Calu3 (cell line): ENCODE measurements at regions of chrX and their contacts with region 1.

Region 1: DNA sequence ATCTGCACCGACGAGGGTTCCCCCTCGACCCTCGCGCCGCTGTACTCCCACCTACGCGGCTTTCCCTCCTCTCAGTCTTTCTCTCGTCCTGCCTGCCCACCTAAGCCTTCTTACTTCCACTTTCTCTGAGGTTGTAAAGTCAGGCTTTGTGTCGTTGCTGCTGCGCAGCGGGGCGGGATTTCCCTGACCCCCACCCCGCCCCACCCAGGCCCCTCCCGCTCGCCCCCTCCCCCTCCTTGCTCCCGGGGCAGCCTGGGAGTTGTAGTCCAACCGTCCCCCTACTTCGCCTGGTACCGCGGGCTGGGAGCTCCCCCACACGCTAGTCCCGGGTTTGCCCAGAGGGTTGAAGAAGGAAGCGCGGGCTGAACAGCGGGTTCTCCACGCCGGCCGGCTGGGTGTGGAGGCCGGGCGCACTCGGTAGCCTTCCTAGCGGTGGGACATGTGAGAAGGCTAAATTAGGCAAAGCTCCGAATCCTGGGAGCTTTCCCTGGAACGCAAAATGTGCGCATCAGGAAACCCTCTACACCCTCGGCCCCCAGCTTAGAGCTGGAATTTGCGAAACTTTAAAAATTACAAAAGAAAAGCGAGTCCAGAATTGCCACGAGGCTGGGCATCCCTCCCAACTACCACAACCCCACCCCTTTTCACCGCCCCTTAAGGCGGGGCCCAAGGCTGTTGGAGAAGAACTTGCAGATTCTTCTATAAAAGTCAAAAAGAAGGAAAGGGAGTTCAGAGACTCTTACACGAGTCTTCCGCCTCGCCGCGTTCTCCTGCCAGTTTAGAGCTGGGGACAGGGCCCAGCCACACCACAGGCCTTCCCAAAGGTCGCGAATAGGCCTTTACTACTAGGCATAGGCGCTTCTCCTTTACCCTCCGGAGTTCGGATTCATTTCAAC is at the start of gene ATP11C:
- DNase-seq: peak; percentile 84
- H3K4me3 Mint-ChIP-seq: peak within 1 kb of the TSS; percentile 86
- H3K27ac Mint-ChIP-seq: peak within 1 kb of the TSS; percentile 96
- H3K4me1 Mint-ChIP-seq: peaks cover 18% of the 10 kb centered on the region
- H3K27me3 Mint-ChIP-seq: no peaks in the 10 kb centered on the region
- CTCF ChIP-seq: no peak
- total RNA-seq, gene ATP11C: 19.0 and 19.7 TPM in 2 replicates

Region 2: DNA sequence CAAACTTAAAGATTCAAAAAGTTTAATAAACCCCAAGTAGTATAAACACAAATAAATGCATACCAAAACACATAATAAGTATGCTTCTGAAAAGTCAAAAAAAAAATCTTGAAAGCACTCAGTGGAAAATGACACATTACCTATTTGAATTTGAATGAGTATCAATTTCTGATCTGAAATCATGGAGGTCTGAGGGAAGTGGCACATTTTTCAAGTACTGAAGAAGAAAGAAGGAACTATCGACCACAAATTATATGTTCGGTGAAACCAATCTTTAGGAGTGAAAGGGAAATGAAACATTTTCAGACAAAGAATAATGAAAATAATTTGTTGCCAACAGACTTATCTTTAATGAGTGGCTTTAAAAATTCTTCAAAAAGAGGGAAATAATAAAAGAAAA is 414.7 kb before region 1 on chrX:
- CTCF ChIA-PET with region 1: interaction called, 10 read pairs
- intact Hi-C with region 1: no loop called
- DNase-seq: no peak
- H3K4me3 Mint-ChIP-seq: no peak overlapping the region
- H3K27ac Mint-ChIP-seq: no peak overlapping the region
- H3K4me1 Mint-ChIP-seq: no peaks in the 10 kb centered on the region
- H3K27me3 Mint-ChIP-seq: no peaks in the 10 kb centered on the region
- CTCF ChIP-seq: no peak

Region 3: GRCh38 chrX:139826065-139827044 is 106.8 kb before region 1 on chrX:
- CTCF ChIA-PET with region 1: no interaction called
- intact Hi-C with region 1: loop called (anchors 5 kb)
- DNase-seq: no peak
- H3K4me3 Mint-ChIP-seq: no peak overlapping the region
- H3K27ac Mint-ChIP-seq: no peak overlapping the region
- H3K4me1 Mint-ChIP-seq: peaks cover 22% of the 10 kb centered on the region
- H3K27me3 Mint-ChIP-seq: no peaks in the 10 kb centered on the region
- CTCF ChIP-seq: no peak

Region 4: GRCh38 chrX:139890991-139891700 is 42.0 kb before region 1 on chrX:
- CTCF ChIA-PET with region 1: no interaction called
- intact Hi-C with region 1: loop called (anchors 2 kb)
- DNase-seq: no peak
- H3K4me3 Mint-ChIP-seq: no peak overlapping the region
- H3K27ac Mint-ChIP-seq: peak overlapping the region; percentile 40
- H3K4me1 Mint-ChIP-seq: peaks cover 10% of the 10 kb centered on the region
- H3K27me3 Mint-ChIP-seq: no peaks in the 10 kb centered on the region
- CTCF ChIP-seq: no peak